ENCODE measurements at regions of chr16 and their contacts with region 1.

Region 1: GRCh38 chr16:66483689-66484481 is 56.8 kb downstream of the BEAN1 start:
- DNase-seq: peak; percentile 77 to 93 (median 92)
- ATAC-seq: peak; percentile 46 to 78
- H3K4me3 ChIP-seq: no peak overlapping the region
- H3K27ac ChIP-seq: no peak overlapping the region
- H3K4me1 ChIP-seq: peaks cover 9% of the 10 kb centered on the region
- H3K27me3 ChIP-seq: no peaks in the 10 kb centered on the region

Region 2: DNA sequence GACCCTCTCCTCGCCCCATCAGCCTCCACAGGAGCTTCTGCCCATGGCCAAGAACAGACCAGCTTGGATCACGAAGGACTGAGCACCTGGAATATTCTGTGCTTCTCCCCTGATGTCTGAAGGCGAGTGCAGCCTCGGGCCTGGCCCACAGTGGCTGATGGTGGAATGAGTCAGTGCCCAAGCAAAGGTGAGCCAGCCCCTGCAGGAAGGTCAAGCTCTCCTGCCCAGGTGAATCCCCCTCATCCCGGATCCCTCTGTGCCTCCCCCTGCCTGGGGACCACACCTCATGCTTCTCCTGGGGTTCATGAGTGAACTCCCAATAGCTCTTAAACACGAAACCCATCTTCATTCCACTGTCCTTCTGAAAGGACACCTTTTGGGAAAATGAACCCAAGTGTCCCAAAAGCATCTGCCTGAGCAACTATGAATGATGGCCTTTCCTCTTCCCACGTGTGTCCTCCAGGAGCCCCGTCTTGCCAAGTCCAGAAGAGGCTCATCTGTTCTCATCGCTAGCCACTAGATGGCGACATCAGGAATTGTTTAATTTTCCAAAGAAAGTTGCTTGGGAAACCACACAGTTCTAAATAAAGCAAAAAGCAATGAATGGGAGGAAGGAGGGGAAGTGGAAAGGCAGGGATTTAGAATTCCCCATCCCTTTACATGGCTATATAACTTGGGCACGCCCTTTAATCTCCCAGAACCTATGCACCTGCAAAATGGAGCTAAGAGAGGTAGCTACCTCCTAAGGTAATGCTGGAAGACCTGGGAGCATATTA is 126.5 kb before region 1 on chr16:
- intact Hi-C with region 1: loop called in 2 of 4 experiments (anchors 5 kb)
- DNase-seq: peak in 1 of 3 donors; percentile 69
- ATAC-seq: peak; percentile 24 to 34
- H3K4me3 ChIP-seq: no peak overlapping the region
- H3K27ac ChIP-seq: no peak overlapping the region
- H3K4me1 ChIP-seq: peaks cover 5% of the 10 kb centered on the region
- H3K27me3 ChIP-seq: no peaks in the 10 kb centered on the region

Region 3: GRCh38 chr16:66406534-66407221 is 77.2 kb before region 1 on chr16:
- intact Hi-C with region 1: loop called in 3 of 4 experiments (anchors 2 to 5 kb)
- DNase-seq: peak; percentile 86 to 95 (median 93)
- ATAC-seq: peak; percentile 88 to 89
- H3K4me3 ChIP-seq: peak overlapping the region; percentile 60
- H3K27ac ChIP-seq: peak overlapping the region; percentile 56
- H3K4me1 ChIP-seq: peaks cover 3% of the 10 kb centered on the region
- H3K27me3 ChIP-seq: no peaks in the 10 kb centered on the region